Activated CD4-positive, alpha-beta memory T cell treated with anti-CD3 and anti-CD28 coated beads, Interleukin-2, amount 10 ng/mL, durations not matched to agents 7 days and 5 days (primary cell): ENCODE measurements at regions of chr17 and their contacts with region 1.

Region 1: DNA sequence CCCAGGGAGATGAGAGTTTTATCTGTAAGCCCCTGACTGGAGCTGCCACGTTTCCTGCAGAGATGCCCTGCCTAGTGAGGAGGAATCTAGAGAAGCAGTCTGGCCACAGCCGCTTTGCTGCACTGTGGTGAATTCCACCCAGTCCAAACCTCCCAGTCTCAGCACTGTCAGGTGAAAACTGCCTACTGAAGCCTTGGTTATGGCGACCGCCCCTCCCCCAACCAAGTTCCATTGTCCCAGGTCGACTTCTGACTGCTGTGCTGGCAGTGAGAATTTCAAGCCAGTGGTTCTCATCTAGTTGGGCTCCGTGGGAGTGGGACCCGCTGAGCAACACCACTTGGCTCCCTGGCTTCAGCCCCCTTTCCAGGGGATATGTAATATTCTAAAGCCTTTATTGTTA is 10.2 kb upstream of the LYZL6 start:
- DNase-seq: no peak
- H3K4me3 Mint-ChIP-seq: no peak overlapping the region
- H3K27ac Mint-ChIP-seq: no peak overlapping the region
- H3K4me1 Mint-ChIP-seq: no peaks in the 10 kb centered on the region
- H3K27me3 Mint-ChIP-seq: peaks cover 31% of the 10 kb centered on the region

Region 2: DNA sequence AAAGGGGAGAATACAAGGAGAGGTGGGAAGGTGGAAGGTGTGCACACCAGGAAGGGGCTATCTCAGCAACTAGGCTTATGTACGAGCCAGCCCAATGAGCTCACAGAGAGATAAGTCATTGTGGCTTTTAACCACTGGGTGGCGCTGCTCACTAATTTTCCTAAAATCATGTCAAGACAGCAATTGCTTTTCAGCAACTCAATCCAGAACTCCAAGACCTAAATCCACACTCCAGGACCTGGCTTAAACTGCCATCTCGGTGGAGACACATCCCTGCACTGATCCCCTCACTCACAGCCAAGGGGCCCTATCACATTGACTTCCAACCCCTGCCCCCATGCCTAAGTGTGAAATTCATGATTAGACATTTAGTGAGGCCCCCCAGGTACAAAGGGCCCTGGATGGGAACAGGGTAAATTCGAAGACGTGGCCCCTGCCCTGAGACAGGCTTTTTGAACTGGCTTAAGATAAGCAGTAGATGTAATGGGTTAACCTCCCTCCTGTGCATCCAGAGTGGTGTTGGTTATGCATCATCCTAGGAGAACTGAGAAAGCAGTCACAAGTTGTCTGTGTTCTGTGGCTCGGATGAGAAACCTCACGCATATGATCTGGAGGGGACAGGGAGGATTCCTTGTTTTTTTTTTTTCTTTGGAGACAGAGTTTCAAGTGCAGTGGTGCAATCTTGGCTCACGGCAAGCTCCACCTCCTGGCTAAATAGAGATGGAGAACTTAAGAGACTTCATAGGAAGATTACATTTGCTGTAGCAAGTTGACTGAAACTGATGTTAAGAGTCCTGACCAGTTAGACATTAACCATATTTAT is 16.0 kb after region 1 on chr17:
- CTCF ChIA-PET with region 1: interaction called, 19 read pairs
- POLR2A ChIA-PET with region 1: no interaction called
- DNase-seq: peak; percentile 80
- H3K4me3 Mint-ChIP-seq: no peak overlapping the region
- H3K27ac Mint-ChIP-seq: no peak overlapping the region
- H3K4me1 Mint-ChIP-seq: peaks cover 2% of the 10 kb centered on the region
- H3K27me3 Mint-ChIP-seq: no peaks in the 10 kb centered on the region